Left cardiac atrium (tissue), 4 donors: ENCODE measurements at regions of chr1 and their contacts with region 1.

Region 1: DNA sequence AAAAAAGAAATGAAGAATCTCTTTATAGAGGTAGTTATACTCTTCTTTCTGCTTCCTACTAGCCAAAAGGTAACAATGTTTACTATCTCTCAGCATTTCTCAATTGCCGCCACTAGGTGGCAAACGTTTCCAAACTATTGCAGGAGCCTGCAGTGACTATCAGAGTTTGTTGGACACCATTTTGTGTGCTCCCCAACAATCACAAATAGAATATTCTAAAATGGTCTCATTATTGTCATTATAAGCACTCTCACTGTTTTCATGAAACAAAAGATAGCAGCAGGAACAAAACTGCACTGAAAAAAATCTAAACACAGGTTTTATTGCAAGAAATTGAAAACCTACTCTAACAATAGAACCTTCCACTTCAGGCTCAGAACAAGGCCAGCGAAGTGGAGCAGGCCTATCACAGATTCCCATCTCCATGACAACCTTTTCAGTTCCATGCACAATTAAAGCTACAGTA is 83.9 kb upstream of the PLPPR4 start:
- DNase-seq: peak; percentile 75
- ATAC-seq: peak; percentile 94 to 96

Region 2: DNA sequence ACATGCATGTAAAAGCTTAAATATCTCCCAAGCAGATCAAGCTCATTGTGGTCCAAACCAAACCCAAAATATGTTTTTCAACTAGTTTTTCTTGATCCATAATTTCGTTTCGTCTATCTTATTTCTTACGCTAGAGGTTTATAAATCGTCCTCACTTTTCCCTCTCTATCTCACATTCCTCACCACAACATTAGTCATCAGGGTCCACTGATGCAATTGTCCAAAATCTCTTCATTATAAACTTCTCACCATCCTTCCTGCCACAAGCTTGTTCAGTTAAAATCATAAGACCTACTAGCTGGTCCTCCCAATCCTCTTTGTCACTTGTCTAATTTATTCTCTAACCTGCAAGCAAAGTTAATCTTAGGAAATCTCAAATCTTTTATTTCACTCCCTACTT is 292.5 kb after region 1 on chr1:
- intact Hi-C with region 1: loop called in 1 of 2 experiments (anchors 10 kb)
- DNase-seq: no peak
- ATAC-seq: no peak